ENCODE measurements at regions of chr2 and their contacts with region 1.

Region 1: GRCh38 chr2:85302121-85302520 is 25.7 kb downstream of the TGOLN2 start:
- DNase-seq: no peak
- H3K4me3 ChIP-seq: no peak overlapping the region
- H3K27ac ChIP-seq: no peak overlapping the region
- H3K27me3 ChIP-seq: no peaks in the 10 kb centered on the region
- CTCF ChIP-seq: no peak

Region 2: GRCh38 chr2:84905181-84906107 is 396.7 kb before region 1 on chr2 and contains the start of gene TMSB10:
- CTCF ChIA-PET with region 1: interaction called, 16 read pairs
- POLR2A ChIA-PET with region 1: interaction called, 3 read pairs
- DNase-seq: no peak
- H3K4me3 ChIP-seq: peak within 1 kb of the TSS; percentile 98
- H3K27ac ChIP-seq: peak within 1 kb of the TSS; percentile 80
- H3K27me3 ChIP-seq: no peaks in the 10 kb centered on the region
- CTCF ChIP-seq: no peak
- polyA plus RNA-seq, gene TMSB10: 4,621 and 5,651 TPM in 2 replicates

Region 3: GRCh38 chr2:84958135-84959044 is 343.7 kb before region 1 on chr2:
- CTCF ChIA-PET with region 1: no interaction called
- POLR2A ChIA-PET with region 1: interaction called, 10 read pairs
- DNase-seq: peak; percentile 70
- H3K4me3 ChIP-seq: no peak overlapping the region
- H3K27ac ChIP-seq: peak overlapping the region; percentile 95
- H3K27me3 ChIP-seq: no peaks in the 10 kb centered on the region
- CTCF ChIP-seq: no peak

Region 4: GRCh38 chr2:85053802-85054201 is 248.3 kb before region 1 on chr2:
- CTCF ChIA-PET with region 1: interaction called, 10 read pairs
- POLR2A ChIA-PET with region 1: no interaction called
- DNase-seq: no peak
- H3K4me3 ChIP-seq: no peak overlapping the region
- H3K27ac ChIP-seq: no peak overlapping the region
- H3K27me3 ChIP-seq: no peaks in the 10 kb centered on the region
- CTCF ChIP-seq: no peak

Region 5: DNA sequence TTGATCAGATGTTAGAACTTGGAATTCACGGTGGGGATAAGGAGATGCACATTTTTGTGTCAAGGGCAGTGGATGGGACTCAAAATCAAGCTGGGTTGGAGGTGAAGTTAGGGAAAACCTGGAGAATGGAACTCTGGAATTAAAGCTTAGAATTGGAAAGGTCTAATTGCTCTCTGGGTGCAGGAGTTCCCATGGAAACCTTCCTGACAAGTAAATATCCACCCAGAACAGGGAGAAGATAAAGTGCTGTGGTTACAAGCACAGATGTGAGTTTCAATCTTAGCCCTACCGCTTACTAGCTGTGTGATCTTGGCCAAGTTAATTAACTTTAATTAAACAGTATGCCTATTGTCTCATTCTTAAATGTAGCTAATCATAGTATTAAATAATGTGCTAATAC is 240.2 kb before region 1 on chr2:
- CTCF ChIA-PET with region 1: interaction called, 214 read pairs
- POLR2A ChIA-PET with region 1: no interaction called
- DNase-seq: no peak
- H3K4me3 ChIP-seq: no peak overlapping the region
- H3K27ac ChIP-seq: no peak overlapping the region
- H3K27me3 ChIP-seq: peaks cover 3% of the 10 kb centered on the region
- CTCF ChIP-seq: no peak

Region 6: GRCh38 chr2:85066874-85067351 is 235.2 kb before region 1 on chr2:
- CTCF ChIA-PET with region 1: interaction called, 214 read pairs
- POLR2A ChIA-PET with region 1: no interaction called
- DNase-seq: peak; percentile 74
- H3K4me3 ChIP-seq: peak overlapping the region; percentile 43
- H3K27ac ChIP-seq: no peak overlapping the region
- H3K27me3 ChIP-seq: peaks cover 3% of the 10 kb centered on the region
- CTCF ChIP-seq: peak; percentile 91

Region 7: GRCh38 chr2:85288244-85288725 is 13.8 kb before region 1 on chr2:
- CTCF ChIA-PET with region 1: interaction called, 38 read pairs
- POLR2A ChIA-PET with region 1: no interaction called
- DNase-seq: no peak
- H3K4me3 ChIP-seq: no peak overlapping the region
- H3K27ac ChIP-seq: peak overlapping the region; percentile 47
- H3K27me3 ChIP-seq: no peaks in the 10 kb centered on the region
- CTCF ChIP-seq: no peak